A673 (cell line): ENCODE measurements at regions of chr14 and their contacts with region 1.

Region 1: DNA sequence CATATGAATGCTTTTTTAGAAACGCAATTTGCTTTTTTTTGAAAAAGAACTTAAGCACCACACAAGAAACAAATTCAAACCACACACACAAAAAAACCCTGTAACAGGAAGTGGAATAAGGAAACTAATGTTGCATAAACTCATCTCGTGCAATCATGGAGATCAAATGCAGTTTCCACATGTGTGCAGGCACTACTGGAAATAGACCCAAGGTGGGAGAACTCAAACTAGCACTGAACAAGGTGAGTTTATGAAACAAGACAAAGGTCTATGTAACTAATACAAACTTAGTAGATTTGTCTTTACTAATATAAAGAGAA is 17.5 kb downstream of the NIN start:
- DNase-seq: no peak
- H3K4me3 ChIP-seq: no peak overlapping the region
- H3K27ac ChIP-seq: no peak overlapping the region
- H3K4me1 ChIP-seq: peaks cover 12% of the 10 kb centered on the region
- H3K27me3 ChIP-seq: no peaks in the 10 kb centered on the region
- CTCF ChIP-seq: no peak

Region 2: GRCh38 chr14:50417853-50418252 is 395.7 kb before region 1 on chr14:
- CTCF ChIA-PET with region 1: no interaction called
- POLR2A ChIA-PET with region 1: no interaction called
- intact Hi-C with region 1: no loop called
- DNase-seq: no peak
- H3K4me3 ChIP-seq: no peak overlapping the region
- H3K27ac ChIP-seq: no peak overlapping the region
- H3K4me1 ChIP-seq: no peaks in the 10 kb centered on the region
- H3K27me3 ChIP-seq: no peaks in the 10 kb centered on the region
- CTCF ChIP-seq: no peak

Region 3: DNA sequence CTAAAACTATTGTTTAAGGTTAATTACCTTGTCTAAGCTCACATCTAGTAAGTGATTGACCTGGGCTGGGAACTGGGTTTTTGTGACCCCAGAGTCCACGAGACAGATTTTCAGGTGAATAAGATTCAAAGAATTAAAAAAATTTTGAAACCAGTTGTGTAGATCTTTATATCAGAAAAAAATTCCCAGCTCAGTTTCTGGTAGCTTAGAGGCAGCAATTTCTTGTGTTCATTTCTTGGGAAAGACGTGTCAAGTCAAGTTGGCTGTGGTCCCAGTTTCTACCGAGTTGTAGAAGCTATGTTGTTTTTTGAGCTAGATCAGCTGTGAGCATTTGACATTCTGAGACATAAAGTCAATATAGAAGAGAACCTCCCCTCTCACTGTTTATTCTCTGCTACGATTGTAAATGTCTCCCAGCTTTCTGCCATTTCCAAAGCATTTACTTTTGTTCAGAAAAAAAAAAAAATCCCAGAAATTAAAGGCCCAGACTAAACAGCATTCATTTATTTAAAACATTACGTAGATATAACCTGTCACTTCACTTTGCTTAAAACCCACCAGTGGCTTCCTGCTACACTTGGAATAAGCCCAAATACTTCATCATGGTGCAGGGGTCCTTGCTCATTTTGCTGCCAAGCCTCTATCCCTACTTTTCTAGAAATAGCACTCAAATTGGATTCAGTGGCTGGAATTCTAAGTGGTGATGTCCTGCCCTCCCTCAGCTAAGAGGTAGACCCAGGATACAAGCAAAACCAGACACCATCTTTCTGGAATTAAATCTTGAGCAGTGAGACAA is 151.3 kb after region 1 on chr14:
- CTCF ChIA-PET with region 1: no interaction called
- POLR2A ChIA-PET with region 1: interaction called, 13 read pairs
- intact Hi-C with region 1: no loop called
- DNase-seq: peak; percentile 64
- H3K4me3 ChIP-seq: no peak overlapping the region
- H3K27ac ChIP-seq: no peak overlapping the region
- H3K4me1 ChIP-seq: peaks cover 31% of the 10 kb centered on the region
- H3K27me3 ChIP-seq: no peaks in the 10 kb centered on the region
- CTCF ChIP-seq: no peak

Region 4: DNA sequence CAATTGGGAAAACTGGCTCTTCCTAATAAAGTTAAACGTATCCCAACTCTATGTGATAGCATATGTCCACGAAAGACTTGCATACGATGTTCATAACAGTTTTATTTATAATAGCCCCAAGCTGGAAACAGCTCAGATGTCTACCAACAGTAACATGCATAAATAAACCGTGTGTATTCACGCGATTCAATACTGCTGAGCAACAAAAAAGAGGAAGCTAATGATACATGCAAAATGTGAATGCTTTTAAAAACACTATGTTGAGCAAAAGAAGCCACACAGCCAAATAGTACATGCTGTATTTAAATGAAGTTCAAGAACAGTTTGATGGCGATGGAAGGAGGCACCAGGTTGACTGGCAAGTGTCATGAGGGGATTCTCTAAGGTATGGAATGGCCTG is 225.7 kb after region 1 on chr14:
- CTCF ChIA-PET with region 1: no interaction called
- POLR2A ChIA-PET with region 1: no interaction called
- intact Hi-C with region 1: no loop called
- DNase-seq: no peak
- H3K4me3 ChIP-seq: no peak overlapping the region
- H3K27ac ChIP-seq: no peak overlapping the region
- H3K4me1 ChIP-seq: no peaks in the 10 kb centered on the region
- H3K27me3 ChIP-seq: no peaks in the 10 kb centered on the region
- CTCF ChIP-seq: no peak

Region 5: DNA sequence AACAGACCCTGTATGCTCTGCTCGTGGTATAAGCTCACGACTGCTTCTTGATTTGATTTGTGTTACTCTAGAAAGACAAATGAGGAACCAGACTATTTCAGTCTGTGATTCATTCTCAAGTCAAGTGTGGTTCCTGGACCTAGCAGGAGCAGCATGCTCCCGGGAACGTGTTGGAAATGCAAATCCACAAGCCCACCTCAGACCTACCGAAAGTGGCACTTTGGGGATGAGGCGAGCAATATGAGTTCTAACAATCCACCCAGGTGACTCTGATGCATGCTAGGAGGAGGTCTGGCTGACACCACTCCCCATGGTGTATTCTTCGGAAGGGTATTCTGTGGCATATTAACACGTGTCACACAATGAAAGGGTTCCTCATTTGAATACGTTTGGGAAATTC is 367.1 kb after region 1 on chr14:
- CTCF ChIA-PET with region 1: no interaction called
- POLR2A ChIA-PET with region 1: no interaction called
- intact Hi-C with region 1: no loop called
- DNase-seq: no peak
- H3K4me3 ChIP-seq: no peak overlapping the region
- H3K27ac ChIP-seq: no peak overlapping the region
- H3K4me1 ChIP-seq: peaks cover 12% of the 10 kb centered on the region
- H3K27me3 ChIP-seq: no peaks in the 10 kb centered on the region
- CTCF ChIP-seq: no peak